BJ (cell line): ENCODE measurements at regions of chr2 and their contacts with region 1.

Region 1: DNA sequence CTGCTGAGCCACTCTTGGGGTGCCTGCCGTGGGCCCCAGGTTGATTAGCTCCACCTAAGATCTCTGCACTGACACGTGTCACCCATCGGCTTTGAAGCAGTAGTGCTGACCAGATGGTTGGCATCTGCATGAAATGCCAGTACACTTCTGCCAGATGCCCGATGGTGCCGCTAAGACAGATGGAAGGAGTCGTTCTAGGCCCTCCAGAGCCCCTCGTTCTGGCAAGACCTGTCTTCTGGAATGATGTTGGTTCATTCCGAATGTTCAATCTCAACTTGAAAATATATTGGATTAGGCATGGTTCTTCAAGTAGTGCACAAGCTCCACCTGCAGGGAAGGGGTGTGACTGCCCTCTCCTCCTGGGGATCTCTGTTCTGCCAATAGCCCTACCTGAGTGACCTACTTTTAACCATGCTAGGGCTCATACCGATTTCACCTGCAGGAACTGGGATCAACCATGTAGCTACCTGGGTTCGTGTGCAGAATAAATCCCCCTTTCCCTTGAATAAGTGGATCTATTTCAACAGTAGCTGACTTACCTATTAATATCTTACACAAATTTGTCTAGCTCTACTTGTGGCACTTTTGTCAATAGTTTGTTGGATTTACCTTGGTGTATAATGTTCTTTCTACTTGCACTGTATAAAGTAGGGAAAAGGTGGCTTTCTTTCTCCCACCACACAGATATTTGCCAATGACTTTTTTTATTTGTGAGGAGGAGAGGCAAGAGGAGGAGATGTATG is 342.6 kb downstream of the CTNNA2 start:
- DNase-seq: no peak
- H3K4me3 ChIP-seq: no peak overlapping the region
- H3K27me3 ChIP-seq: no peaks in the 10 kb centered on the region
- CTCF ChIP-seq: peak; percentile 43

Region 2: GRCh38 chr2:79660557-79660956 is 194.9 kb before region 1 on chr2:
- CTCF ChIA-PET with region 1: interaction called, 19 read pairs
- POLR2A ChIA-PET with region 1: no interaction called
- DNase-seq: no peak
- H3K4me3 ChIP-seq: no peak overlapping the region
- H3K27me3 ChIP-seq: no peaks in the 10 kb centered on the region
- CTCF ChIP-seq: peak; percentile 25

Region 3: DNA sequence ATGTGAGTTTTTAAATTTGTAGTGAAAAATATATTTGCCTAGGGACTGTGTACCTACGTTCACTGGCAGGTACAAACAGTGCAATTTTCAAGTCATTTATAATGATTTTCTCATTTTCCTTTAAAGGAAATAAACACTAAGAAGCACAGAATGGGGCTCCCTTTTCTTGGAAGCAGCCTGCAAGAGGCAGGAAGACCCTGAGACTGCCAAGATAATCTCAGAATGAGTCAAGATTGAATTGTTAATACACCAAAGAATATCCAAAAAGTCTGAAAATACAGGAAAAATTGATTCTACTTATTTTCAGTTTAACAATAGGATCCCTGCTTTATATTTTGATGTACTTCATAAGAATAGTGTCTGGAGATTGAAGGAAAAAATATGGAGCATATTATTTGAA is 11.4 kb before region 1 on chr2:
- CTCF ChIA-PET with region 1: no interaction called
- POLR2A ChIA-PET with region 1: no interaction called
- DNase-seq: no peak
- H3K4me3 ChIP-seq: no peak overlapping the region
- H3K27me3 ChIP-seq: no peaks in the 10 kb centered on the region
- CTCF ChIP-seq: no peak